ENCODE measurements at regions of chr7 and their contacts with region 1.

Region 1: GRCh38 chr7:22559829-22560489 is 60.0 kb upstream of the STEAP1B start:
- DNase-seq: peak; percentile 58 to 75
- ATAC-seq: peak; percentile 72 to 88 (median 76)
- H3K4me3 ChIP-seq: no peak overlapping the region
- H3K27ac ChIP-seq: peak overlapping the region; percentile 74
- H3K4me1 ChIP-seq: peaks cover 41% of the 10 kb centered on the region
- H3K27me3 ChIP-seq: no peaks in the 10 kb centered on the region
- CTCF ChIP-seq: peak; percentile 93

Region 2: DNA sequence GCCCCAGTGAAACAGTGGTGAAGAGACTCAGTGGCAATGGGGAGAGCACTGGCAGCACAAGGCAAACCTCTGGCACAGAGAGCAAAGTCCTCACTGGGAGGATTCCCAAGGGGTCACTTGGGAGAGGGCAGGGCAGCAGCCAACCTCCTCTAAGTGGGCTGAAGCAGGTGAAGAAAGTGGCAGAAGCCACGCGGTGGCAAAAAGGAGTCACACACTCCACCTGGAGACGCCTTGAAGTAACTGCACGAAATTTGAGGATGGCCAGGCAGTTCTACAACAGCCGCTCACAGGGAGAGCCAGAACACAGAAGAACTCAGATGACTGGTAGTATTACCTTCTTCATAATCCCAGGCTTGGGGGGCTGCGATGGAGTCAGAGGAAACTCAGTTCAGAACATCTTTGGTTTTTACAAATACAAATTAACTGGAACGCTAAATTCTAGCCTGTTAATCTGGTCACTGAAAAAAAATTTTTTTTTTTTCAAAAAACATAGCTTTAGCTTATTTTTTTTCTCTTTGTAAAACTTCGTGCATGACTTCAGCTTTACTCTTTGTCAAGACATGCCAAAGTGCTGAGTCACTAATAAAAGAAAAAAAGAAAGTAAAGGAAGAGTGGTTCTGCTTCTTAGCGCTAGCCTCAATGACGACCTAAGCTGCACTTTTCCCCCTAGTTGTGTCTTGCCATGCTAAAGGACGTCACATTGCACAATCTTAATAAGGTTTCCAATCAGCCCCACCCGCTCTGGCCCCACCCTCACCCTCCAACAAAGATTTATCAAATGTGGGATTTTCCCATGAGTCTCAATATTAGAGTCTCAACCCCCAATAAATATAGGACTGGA is 166.6 kb after region 1 on chr7:
- intact Hi-C with region 1: loop called (anchors 1 to 2 kb)
- DNase-seq: peak; percentile 35 to 72
- ATAC-seq: peak; percentile 74 to 89 (median 85)
- H3K4me3 ChIP-seq: peak overlapping the region; percentile 60
- H3K27ac ChIP-seq: peak overlapping the region; percentile 65
- H3K4me1 ChIP-seq: peaks cover 37% of the 10 kb centered on the region
- H3K27me3 ChIP-seq: no peaks in the 10 kb centered on the region
- CTCF ChIP-seq: peak; percentile 68

Region 3: DNA sequence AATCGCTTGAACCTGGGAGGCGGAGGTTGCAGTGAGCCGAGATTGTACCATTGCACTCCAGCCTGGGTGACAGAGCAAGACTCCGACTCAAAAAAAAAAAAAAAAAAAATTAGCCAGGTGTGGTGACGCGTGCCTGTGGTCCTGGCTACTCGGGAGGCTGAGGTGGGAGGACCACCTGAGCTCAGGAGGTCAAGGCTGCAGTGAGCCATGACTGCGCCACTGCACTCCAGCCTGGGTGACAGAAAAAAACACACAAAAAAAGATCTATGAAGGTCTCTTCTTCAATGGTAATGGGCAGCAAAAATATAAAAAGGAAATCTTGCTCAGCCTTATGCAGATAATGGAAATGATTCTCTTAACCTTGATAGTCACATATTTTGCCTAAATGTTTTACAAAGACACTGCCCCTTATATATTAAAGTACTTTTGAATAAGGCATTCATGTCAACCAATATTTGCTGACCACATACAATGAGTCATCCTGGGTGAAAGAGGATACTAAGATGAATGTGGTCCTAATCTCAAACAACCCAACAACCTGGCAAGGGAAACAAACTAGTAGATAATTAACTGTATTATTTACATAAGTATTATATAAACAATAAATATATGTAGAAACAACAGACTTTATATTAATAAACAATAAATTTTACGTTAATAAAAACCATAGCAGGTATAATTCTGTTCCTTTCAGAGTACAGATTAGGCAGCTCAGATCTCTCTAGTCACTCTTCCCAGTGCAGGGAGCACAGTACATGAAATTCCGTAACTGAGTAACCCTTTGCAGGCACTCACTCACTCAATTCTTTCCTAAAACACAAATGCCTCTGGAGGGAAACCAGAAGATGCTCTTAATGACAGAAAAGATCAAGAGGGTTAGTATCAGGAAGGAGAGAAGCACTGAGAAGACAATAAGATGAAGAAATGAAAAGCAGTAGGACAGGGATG is 254.6 kb after region 1 on chr7:
- intact Hi-C with region 1: loop called in 1 of 2 experiments (anchors 5 kb)
- DNase-seq: no peak
- ATAC-seq: peak in 3 of 4 donors; percentile 55 to 66 (median 64)
- H3K4me3 ChIP-seq: no peak overlapping the region
- H3K27ac ChIP-seq: peak overlapping the region; percentile 32
- H3K4me1 ChIP-seq: peaks cover 60% of the 10 kb centered on the region
- H3K27me3 ChIP-seq: no peaks in the 10 kb centered on the region
- CTCF ChIP-seq: no peak

Region 4: DNA sequence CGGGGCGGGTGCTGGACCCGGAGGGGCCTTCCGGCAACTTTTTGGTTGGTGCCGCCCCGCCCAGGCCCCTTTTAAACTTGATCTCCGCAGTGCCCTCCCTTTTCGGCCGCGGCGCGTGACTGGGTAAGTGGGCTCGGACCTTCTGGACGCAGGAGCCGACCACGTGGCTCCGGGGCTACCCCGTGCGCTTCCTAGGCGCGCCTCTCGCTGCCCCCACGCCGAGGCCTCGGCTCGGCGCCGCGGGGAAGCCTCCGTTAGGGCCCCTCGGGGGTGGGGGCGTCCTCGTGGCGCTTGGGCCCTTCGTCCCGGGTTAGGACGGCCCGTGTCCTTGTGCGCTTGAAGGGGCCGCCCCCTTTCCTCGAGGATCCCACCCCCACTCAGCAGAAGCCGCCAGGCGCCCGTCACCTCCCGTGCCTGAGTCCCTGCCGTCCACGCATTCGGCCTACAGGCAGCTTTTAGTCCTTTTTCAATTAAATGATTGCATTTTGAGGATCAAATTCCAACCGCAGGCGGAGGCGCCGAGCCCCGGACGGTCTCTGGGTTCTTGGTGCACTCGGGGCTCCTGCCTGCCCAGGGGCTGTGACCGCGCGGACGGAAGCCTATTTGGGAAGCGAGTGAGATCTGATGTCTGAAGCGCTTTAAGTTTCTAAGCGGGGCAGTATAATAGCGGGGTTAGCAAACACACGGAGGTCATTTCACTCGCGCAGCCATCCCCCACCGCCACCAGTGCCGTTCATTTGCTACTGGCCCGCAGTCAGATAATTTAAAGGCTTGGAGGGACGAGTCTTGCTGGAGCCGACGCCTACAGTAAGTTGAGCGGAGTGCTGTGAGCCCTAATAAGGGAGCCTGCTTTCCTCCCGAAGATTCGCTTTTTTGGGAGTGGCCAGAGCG is 294.4 kb after region 1 on chr7:
- intact Hi-C with region 1: loop called in 1 of 2 experiments (anchors 5 kb)
- DNase-seq: peak; percentile 95
- ATAC-seq: peak; percentile 76 to 84 (median 80)
- H3K4me3 ChIP-seq: peak overlapping the region; percentile 78
- H3K27ac ChIP-seq: peak overlapping the region; percentile 97
- H3K4me1 ChIP-seq: peaks cover 37% of the 10 kb centered on the region
- H3K27me3 ChIP-seq: no peaks in the 10 kb centered on the region
- CTCF ChIP-seq: peak; percentile 78

Region 5: DNA sequence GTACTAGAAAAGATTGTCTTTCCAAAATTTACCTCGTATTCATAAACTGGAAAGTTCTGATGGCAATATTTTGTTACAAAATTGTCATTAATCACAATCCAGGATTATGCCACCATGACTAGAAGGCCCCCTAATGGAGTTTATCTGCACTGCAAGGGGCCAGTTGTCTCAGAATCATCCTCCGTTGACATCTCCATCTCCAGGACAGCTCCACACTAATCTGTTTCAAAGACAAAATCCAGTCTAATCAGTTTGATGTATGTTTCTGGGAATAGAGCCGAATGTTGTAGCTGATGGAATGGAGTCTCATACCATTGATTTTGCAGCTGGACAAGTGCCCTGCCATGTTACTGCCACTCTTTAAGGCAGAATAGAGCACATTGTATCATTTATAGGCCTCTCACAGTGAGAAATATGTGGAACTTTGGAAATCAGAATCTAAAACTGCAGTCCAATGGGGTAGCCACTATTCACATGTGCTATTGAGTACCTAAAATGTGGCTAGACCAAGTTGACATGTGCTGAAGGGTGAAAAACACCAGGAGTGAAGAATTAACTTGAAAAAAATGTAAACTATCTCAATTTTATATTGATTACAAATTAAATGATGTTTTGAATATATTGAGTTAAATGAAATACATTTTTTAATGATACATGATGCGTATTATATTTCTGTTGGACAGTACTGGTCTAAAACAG is 301.0 kb after region 1 on chr7:
- intact Hi-C with region 1: loop called (anchors 5 kb)
- DNase-seq: no peak
- ATAC-seq: peak; percentile 45 to 71 (median 53)
- H3K4me3 ChIP-seq: no peak overlapping the region
- H3K27ac ChIP-seq: peak overlapping the region; percentile 97
- H3K4me1 ChIP-seq: peaks cover 30% of the 10 kb centered on the region
- H3K27me3 ChIP-seq: no peaks in the 10 kb centered on the region
- CTCF ChIP-seq: peak; percentile 68

Region 6: DNA sequence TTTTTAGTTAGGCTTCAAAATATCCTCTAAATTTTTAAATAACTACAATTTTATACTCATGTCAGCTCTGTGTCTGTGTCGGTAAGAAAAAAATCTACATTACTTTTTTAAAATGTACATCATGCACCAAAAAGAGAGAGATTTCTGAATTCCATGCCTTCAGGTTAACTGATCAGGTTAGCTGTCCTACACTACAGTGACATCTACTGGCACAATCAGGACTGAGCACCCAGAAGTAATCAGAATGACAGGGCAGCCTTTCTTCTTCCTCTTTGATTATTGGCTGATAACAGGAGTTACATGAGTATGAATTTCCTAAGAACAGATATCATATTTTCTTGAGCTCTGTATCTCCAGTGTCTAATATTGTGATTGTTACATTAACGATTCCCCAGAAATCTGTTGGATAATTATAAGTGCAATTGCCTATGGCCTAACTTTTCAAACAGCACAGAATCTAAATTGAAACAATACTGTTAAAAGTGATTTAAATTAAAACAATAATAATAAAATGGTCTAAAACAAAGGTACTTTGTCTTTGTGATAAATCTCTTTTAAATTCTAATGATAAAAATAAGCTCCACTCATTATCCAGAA is 495.7 kb after region 1 on chr7:
- intact Hi-C with region 1: loop called (anchors 1 to 5 kb)
- DNase-seq: no peak
- ATAC-seq: peak; percentile 76 to 90 (median 85)
- H3K4me3 ChIP-seq: no peak overlapping the region
- H3K27ac ChIP-seq: no peak overlapping the region
- H3K4me1 ChIP-seq: no peaks in the 10 kb centered on the region
- H3K27me3 ChIP-seq: no peaks in the 10 kb centered on the region
- CTCF ChIP-seq: peak; percentile 93